Activated CD4-positive, alpha-beta T cell treated with anti-CD3 and anti-CD28 coated beads for 36 hours (primary cell): ENCODE measurements at regions of chr2 and their contacts with region 1.

Region 1: DNA sequence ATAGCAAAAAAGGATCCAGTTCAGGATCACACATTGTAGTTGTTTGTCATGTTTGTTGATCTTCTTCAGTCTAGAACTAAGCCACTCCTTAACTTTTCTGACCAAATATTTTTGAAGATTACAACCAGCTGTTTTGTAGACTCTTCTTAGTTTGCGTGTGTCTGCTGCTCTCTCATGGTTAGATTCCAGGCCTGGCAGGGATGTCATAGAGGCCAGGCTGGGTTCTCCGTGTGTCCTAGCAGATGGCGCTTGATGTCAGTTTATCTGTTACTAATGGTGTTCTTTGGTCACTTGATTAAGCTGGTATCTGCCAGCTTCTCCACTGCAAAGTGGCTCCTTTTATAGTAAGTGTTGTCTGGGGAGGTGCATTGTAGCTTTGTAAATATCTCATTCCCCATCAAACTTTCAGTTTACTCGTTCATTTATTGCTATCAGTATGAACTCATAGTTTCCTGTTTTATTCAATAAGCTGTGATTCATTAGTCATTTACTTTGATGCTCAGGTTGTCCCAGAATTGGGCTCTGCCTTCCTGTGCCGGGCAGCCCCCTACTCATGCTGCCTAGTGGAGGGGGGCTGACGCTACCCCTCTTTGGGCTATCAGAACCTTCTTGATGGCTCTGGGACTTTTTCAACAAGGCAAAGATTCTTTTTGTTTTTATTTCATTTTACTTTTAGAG is 42.1 kb downstream of the GRHL1 start:
- DNase-seq: peak; percentile 31
- ATAC-seq: peak; percentile 88
- H3K4me3 Mint-ChIP-seq: no peak overlapping the region
- H3K27ac Mint-ChIP-seq: no peak overlapping the region
- H3K4me1 Mint-ChIP-seq: peaks cover 13% of the 10 kb centered on the region
- H3K27me3 Mint-ChIP-seq: no peaks in the 10 kb centered on the region

Region 2: DNA sequence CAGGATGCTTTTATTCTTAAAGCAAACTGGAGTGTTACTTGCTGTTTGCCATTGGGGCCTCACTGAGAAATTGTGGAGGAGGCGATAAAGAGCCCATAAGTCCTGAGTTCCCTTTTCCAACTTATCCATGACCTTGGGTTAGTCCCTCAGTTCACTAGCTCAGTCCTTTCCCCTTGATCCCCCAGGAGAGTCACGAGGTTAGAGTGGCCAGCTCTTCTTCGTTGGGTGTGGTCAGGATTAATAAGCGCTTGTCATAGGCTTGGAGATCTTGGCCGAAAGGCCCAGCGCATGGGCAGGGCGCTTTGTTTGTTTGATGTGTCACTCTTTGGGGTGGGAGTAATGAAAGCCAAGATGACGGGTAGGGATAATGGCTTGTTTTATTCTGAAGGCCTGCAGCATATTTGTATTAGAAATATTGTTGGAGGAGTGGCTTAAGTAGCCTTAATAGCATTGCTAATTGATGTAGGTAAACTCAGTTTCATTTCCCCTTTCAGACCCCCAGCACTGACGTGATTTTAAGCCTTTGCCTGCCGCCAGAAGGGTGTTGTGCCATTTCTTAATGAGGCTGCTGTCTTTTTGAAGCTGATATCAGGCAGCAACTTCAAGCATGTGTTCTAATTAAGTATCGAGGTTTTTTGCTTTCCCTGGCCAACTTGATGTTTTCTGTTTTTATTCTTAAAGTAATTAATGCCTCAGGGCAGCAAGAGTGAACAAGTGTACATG is 26.4 kb before region 1 on chr2:
- CTCF ChIA-PET with region 1: no interaction called
- POLR2A ChIA-PET with region 1: interaction called, 14 read pairs
- intact Hi-C with region 1: no loop called
- DNase-seq: no peak
- ATAC-seq: no peak
- H3K4me3 Mint-ChIP-seq: no peak overlapping the region
- H3K27ac Mint-ChIP-seq: no peak overlapping the region
- H3K4me1 Mint-ChIP-seq: peaks cover 21% of the 10 kb centered on the region
- H3K27me3 Mint-ChIP-seq: no peaks in the 10 kb centered on the region

Region 3: DNA sequence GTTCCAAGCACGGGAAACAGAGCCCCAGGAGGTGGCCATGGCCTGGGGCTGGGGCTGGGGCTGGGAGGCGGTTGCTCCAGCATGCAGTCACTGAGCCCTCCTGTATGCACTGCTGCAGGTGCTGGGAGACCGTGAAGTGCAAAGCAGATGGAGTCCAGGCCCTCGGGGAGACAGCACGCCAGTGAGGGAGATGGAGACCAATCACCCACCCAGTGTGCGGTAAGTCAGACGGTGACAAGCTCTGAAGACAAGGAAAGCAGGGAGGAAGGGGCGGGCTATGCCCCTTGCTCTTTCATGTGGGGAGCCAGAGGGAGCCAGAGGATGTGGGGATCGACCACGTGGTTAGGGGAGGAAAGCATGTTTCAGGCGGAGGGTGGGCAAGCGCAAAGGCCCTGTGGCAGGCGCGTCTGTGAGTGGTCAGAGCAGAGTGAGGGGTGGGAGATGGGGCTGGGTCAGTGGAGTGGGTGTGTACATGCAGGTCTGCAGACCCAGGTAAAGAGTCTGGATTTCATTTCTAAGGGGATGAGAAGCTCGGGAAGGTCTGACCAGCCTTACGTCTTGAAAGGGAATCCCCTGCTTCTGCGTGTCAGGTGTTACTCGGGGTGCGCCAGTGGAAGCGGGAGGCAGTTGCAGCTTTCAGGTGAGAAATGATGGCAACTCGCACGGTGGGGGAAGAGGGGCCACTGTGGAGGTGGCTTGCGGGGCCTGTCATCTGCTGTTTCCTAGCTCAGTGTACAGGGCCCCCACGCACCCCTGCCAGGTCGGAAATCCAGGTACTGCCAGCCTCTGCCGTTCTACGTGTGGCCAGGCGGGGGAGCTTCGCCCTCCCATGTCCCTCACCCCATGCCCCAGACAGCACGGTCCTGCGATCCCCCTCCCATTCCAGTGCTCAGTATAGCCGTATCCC is 148.4 kb after region 1 on chr2:
- CTCF ChIA-PET with region 1: no interaction called
- POLR2A ChIA-PET with region 1: no interaction called
- intact Hi-C with region 1: no loop called
- DNase-seq: peak; percentile 67
- ATAC-seq: peak; percentile 74
- H3K4me3 Mint-ChIP-seq: no peak overlapping the region
- H3K27ac Mint-ChIP-seq: no peak overlapping the region
- H3K4me1 Mint-ChIP-seq: peaks cover 26% of the 10 kb centered on the region
- H3K27me3 Mint-ChIP-seq: no peaks in the 10 kb centered on the region